ENCODE measurements at regions of chr1 and their contacts with region 1.

Region 1: GRCh38 chr1:159071970-159072582 is 4.5 kb downstream of the AIM2 start:
- DNase-seq: peak; percentile 48
- H3K4me3 ChIP-seq: no peak overlapping the region
- H3K27ac ChIP-seq: no peak overlapping the region
- H3K27me3 ChIP-seq: no peaks in the 10 kb centered on the region
- CTCF ChIP-seq: peak; percentile 78

Region 2: DNA sequence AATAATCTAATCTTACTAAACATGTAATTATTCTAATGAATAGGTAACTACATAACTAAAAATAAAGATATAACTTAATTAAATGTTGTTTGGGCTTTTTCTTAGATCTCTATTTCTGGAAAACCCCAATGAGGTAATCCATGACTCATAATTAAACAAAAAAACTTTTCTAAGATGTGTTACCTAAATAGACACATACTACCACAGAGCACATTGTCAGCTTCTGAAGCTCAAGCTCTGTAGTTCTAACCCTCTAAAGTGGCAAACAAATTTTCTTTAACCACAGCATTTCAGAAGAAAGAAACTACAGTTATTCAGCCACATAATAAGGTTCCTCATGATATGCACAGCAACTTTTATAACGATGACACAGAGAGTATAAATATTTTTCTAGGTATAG is 355.7 kb before region 1 on chr1:
- CTCF ChIA-PET with region 1: no interaction called
- POLR2A ChIA-PET with region 1: no interaction called
- DNase-seq: no peak
- H3K4me3 ChIP-seq: no peak overlapping the region
- H3K27ac ChIP-seq: no peak overlapping the region
- H3K27me3 ChIP-seq: no peaks in the 10 kb centered on the region
- CTCF ChIP-seq: no peak

Region 3: GRCh38 chr1:158998781-158999161 is 73.3 kb before region 1 on chr1:
- CTCF ChIA-PET with region 1: interaction called, 21 read pairs
- POLR2A ChIA-PET with region 1: no interaction called
- DNase-seq: peak; percentile 18
- H3K4me3 ChIP-seq: peak overlapping the region; percentile 69
- H3K27ac ChIP-seq: no peak overlapping the region
- H3K27me3 ChIP-seq: no peaks in the 10 kb centered on the region
- CTCF ChIP-seq: peak; percentile 89

Region 4: GRCh38 chr1:159055181-159055641 is 16.9 kb before region 1 on chr1:
- CTCF ChIA-PET with region 1: interaction called, 15 read pairs
- POLR2A ChIA-PET with region 1: no interaction called
- DNase-seq: no peak
- H3K4me3 ChIP-seq: no peak overlapping the region
- H3K27ac ChIP-seq: no peak overlapping the region
- H3K27me3 ChIP-seq: no peaks in the 10 kb centered on the region
- CTCF ChIP-seq: no peak

Region 5: GRCh38 chr1:159084152-159084551 is 12.1 kb after region 1 on chr1:
- CTCF ChIA-PET with region 1: interaction called, 20 read pairs
- POLR2A ChIA-PET with region 1: no interaction called
- DNase-seq: no peak
- H3K4me3 ChIP-seq: no peak overlapping the region
- H3K27ac ChIP-seq: no peak overlapping the region
- H3K27me3 ChIP-seq: peaks cover 3% of the 10 kb centered on the region
- CTCF ChIP-seq: no peak

Region 6: DNA sequence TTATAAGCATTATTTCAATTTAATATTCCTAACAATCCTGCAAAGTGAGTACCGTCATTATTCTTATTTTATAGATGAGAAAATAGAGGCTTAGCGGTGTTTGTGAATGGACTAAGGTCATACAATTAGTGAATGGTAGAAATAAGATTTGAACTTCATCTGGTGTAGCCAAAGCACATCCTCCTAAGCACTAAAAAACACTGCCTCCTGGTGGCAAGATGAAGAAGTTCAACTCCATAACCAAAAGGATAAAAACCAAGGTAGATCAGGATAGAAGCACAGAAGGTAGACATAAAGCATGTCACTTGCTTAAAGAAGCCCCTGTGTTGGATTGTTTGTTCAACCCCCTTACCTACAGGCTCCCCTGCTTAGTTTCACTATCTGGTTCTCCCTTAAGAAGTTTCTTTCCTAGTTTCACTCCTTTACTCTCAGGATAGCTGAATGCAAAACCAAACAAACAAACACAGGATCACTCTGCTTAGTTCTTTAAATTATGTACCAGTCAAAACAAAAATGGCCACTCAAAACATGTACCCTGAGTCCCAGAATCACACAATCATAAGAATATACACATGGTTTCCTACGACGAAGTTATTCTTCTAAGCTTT is 17.2 kb after region 1 on chr1:
- CTCF ChIA-PET with region 1: interaction called, 20 read pairs
- POLR2A ChIA-PET with region 1: no interaction called
- DNase-seq: no peak
- H3K4me3 ChIP-seq: no peak overlapping the region
- H3K27ac ChIP-seq: no peak overlapping the region
- H3K27me3 ChIP-seq: no peaks in the 10 kb centered on the region
- CTCF ChIP-seq: peak; percentile 50